ENCODE measurements at regions of chr21 and their contacts with region 1.

Region 1: GRCh38 chr21:46143001-46143427 is 12.4 kb downstream of the FTCD start:
- DNase-seq: no peak
- ATAC-seq: no peak
- H3K4me3 ChIP-seq: no peak overlapping the region
- H3K27ac ChIP-seq: no peak overlapping the region
- H3K4me1 ChIP-seq: no peaks in the 10 kb centered on the region
- H3K27me3 ChIP-seq: no peaks in the 10 kb centered on the region
- CTCF ChIP-seq: no peak

Region 2: DNA sequence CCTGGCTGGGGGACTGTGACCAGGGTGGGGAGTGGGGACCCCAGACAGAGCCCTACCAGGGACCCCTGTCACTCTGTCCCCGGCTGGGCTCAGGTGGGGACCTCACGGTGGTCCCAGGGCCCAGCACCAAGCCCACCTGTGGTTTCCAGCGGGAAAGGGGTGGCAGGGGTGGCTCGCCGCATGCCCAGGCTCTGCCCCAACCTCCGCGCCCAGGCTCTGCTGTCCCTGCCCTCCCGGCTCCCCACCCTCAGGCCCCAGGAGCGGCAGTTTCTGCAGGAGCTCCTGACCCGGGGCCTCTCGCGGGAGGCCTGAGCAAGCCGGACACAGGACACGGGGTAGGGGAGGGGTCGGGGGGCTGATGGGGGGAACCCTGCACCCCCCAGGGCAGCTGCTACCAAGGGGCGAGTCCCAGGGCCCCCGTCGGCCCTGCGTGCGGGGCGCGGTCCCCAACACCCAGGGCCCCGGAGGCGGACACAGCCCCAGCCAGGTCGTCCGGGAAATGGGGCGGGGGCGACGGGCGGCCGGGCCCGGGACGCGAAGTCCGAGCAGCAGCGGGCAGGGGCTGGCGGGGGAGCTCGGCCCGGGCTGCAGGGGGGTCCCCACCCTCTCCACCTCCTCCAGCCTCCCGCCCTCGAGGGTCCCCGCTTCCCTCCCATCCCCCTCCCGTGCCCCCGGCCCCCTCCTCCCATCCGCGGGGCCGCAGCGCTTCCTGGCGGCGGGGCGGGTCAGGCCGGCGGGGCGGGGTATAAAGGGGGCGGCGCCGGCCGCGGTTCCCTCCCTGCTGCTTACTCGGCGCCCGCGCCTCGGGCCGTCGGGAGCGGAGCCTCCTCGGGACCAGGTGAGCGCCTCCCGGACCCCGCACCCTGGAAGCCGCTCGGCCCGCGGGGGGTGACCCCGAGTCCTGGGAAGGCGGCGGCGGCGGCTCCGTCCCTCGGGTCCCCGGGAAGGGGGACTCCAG is 45.4 kb before region 1 on chr21 and contains the start of gene COL6A2:
- CTCF ChIA-PET with region 1: no interaction called
- POLR2A ChIA-PET with region 1: no interaction called
- in situ Hi-C with region 1: no loop called
- intact Hi-C with region 1: no loop called
- DNase-seq: no peak
- ATAC-seq: peak; percentile 92
- H3K4me3 ChIP-seq: peak within 1 kb of the TSS; percentile 26 to 45; a peak in 3 of 4 replicates
- H3K27ac ChIP-seq: no peak within 1 kb of the TSS
- H3K4me1 ChIP-seq: no peaks in the 10 kb centered on the region
- H3K27me3 ChIP-seq: no peaks in the 10 kb centered on the region
- CTCF ChIP-seq: peak; percentile 34; the same call in 1 of the 2 replicates
- total RNA-seq, gene COL6A2: 29.9 TPM

Region 3: GRCh38 chr21:46210378-46211136 is 67.5 kb after region 1 on chr21:
- CTCF ChIA-PET with region 1: interaction called, 4 read pairs
- POLR2A ChIA-PET with region 1: interaction called, 23 read pairs
- in situ Hi-C with region 1: no loop called
- intact Hi-C with region 1: no loop called
- DNase-seq: no peak
- ATAC-seq: no peak
- H3K4me3 ChIP-seq: no peak overlapping the region
- H3K27ac ChIP-seq: no peak overlapping the region
- H3K4me1 ChIP-seq: no peaks in the 10 kb centered on the region
- H3K27me3 ChIP-seq: no peaks in the 10 kb centered on the region
- CTCF ChIP-seq: no peak; the same call in 1 of the 2 replicates

Region 4: DNA sequence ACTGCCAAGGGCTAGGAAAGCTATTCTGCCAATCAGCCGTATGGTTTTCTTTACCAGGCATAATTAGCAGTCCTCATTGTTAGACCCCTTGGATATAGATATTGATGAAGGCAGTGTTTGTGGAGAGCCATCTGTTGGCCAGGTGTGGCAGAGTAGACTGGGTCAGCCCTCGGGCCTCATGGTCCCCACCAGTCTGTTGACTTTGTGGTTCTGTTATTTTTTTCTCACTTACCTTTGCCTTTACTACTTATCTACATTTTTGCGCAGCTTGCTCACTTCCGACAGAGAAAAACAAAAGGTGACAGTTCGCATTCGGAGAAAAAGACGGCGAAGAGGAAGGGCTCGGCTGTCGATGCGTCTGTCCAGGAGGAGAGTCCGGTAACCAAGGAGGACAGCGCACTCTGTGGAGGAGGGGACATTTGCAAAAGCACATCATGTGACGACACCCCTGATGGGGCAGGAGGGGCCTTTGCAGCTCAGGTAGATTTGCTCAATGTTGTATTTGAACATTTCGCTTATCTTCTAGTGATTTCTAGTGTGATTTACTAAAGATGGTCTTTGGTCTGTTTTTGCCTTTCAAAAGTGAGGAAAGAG is 183.2 kb after region 1 on chr21:
- CTCF ChIA-PET with region 1: no interaction called
- POLR2A ChIA-PET with region 1: no interaction called
- in situ Hi-C with region 1: no loop called
- intact Hi-C with region 1: no loop called
- DNase-seq: no peak
- ATAC-seq: no peak
- H3K4me3 ChIP-seq: peak overlapping the region; percentile 55 to 71; a peak in 3 of 4 replicates
- H3K27ac ChIP-seq: peak overlapping the region; percentile 88
- H3K4me1 ChIP-seq: peaks cover 21% of the 10 kb centered on the region
- H3K27me3 ChIP-seq: no peaks in the 10 kb centered on the region
- CTCF ChIP-seq: no peak

Region 5: GRCh38 chr21:46483300-46484295 is 340.6 kb after region 1 on chr21:
- CTCF ChIA-PET with region 1: no interaction called
- POLR2A ChIA-PET with region 1: no interaction called
- in situ Hi-C with region 1: no loop called
- intact Hi-C with region 1: no loop called
- DNase-seq: no peak
- ATAC-seq: no peak
- H3K4me3 ChIP-seq: no peak overlapping the region
- H3K27ac ChIP-seq: no peak overlapping the region
- H3K4me1 ChIP-seq: no peaks in the 10 kb centered on the region
- H3K27me3 ChIP-seq: no peaks in the 10 kb centered on the region
- CTCF ChIP-seq: no peak

Measured in Panc1 (cell line).